Activated CD4-positive, alpha-beta memory T cell treated with anti-CD3 and anti-CD28 coated beads for 36 hours (primary cell): ENCODE measurements at regions of chr5 and their contacts with region 1.

Region 1: GRCh38 chr5:56692359-56693219 is 122.8 kb upstream of the MAP3K1 start:
- DNase-seq: no peak
- H3K4me3 Mint-ChIP-seq: peak overlapping the region; percentile 30
- H3K27ac Mint-ChIP-seq: peak overlapping the region; percentile 67
- H3K4me1 Mint-ChIP-seq: peaks cover 71% of the 10 kb centered on the region
- H3K27me3 Mint-ChIP-seq: no peaks in the 10 kb centered on the region

Region 2: GRCh38 chr5:56610093-56610698 is 82.4 kb before region 1 on chr5:
- CTCF ChIA-PET with region 1: no interaction called
- POLR2A ChIA-PET with region 1: no interaction called
- intact Hi-C with region 1: loop called (anchors 2 kb)
- DNase-seq: peak; percentile 73
- H3K4me3 Mint-ChIP-seq: peak overlapping the region; percentile 8
- H3K27ac Mint-ChIP-seq: peak overlapping the region; percentile 85
- H3K4me1 Mint-ChIP-seq: peaks cover 69% of the 10 kb centered on the region
- H3K27me3 Mint-ChIP-seq: no peaks in the 10 kb centered on the region

Region 3: GRCh38 chr5:56656816-56657729 is 35.5 kb before region 1 on chr5:
- CTCF ChIA-PET with region 1: no interaction called
- POLR2A ChIA-PET with region 1: no interaction called
- intact Hi-C with region 1: no loop called
- DNase-seq: no peak
- H3K4me3 Mint-ChIP-seq: no peak overlapping the region
- H3K27ac Mint-ChIP-seq: no peak overlapping the region
- H3K4me1 Mint-ChIP-seq: peaks cover 27% of the 10 kb centered on the region
- H3K27me3 Mint-ChIP-seq: no peaks in the 10 kb centered on the region

Region 4: GRCh38 chr5:56670118-56670483 is 22.5 kb before region 1 on chr5:
- CTCF ChIA-PET with region 1: interaction called, 3 read pairs
- POLR2A ChIA-PET with region 1: no interaction called
- intact Hi-C with region 1: loop called (anchors 2 kb)
- DNase-seq: peak; percentile 68
- H3K4me3 Mint-ChIP-seq: peak overlapping the region; percentile 6
- H3K27ac Mint-ChIP-seq: peak overlapping the region; percentile 26
- H3K4me1 Mint-ChIP-seq: peaks cover 34% of the 10 kb centered on the region
- H3K27me3 Mint-ChIP-seq: no peaks in the 10 kb centered on the region

Region 5: DNA sequence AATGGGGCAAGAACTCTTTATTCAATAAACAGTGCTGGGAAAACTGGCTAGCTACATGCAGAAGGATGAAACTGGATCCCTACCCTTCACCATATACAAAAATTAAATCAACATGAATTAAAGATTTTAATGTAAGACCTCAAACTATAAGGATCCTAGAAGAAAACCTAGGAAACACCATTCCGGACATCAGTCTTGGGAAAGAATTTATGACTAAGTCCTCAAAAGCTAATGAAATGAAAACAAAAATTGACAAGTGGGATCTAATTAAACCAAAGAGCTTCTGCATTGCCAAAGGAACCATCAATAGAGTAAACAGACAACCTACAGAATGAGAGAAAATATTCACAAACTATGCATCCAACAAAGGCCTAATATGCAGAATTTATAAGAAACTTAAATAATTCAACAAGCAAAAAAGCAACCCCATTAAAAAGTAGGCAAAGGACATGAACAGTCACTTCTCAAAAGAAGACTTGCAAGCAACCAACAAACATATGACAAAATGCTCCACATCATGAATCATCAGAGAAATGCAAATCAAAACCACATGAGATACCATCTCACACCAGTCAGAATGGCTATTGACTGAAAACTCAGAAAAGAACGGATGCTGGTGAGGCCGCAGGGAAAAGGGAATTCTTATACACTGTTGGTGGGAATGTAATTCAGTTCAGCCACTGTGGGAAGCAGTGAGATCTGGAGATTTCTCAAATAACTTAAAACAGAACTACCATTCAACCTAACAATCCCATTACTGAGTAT is 18.4 kb after region 1 on chr5:
- CTCF ChIA-PET with region 1: no interaction called
- POLR2A ChIA-PET with region 1: no interaction called
- intact Hi-C with region 1: no loop called
- DNase-seq: peak; percentile 40
- H3K4me3 Mint-ChIP-seq: no peak overlapping the region
- H3K27ac Mint-ChIP-seq: peak overlapping the region; percentile 11
- H3K4me1 Mint-ChIP-seq: peaks cover 26% of the 10 kb centered on the region
- H3K27me3 Mint-ChIP-seq: no peaks in the 10 kb centered on the region

Region 6: GRCh38 chr5:56737002-56737621 is 44.5 kb after region 1 on chr5:
- CTCF ChIA-PET with region 1: no interaction called
- POLR2A ChIA-PET with region 1: no interaction called
- intact Hi-C with region 1: loop called (anchors 2 kb)
- DNase-seq: peak; percentile 28
- H3K4me3 Mint-ChIP-seq: no peak overlapping the region
- H3K27ac Mint-ChIP-seq: peak overlapping the region; percentile 66
- H3K4me1 Mint-ChIP-seq: peaks cover 33% of the 10 kb centered on the region
- H3K27me3 Mint-ChIP-seq: no peaks in the 10 kb centered on the region